Ovary (tissue), 10 donors: ENCODE measurements at regions of chr13 and their contacts with region 1.

Region 1: DNA sequence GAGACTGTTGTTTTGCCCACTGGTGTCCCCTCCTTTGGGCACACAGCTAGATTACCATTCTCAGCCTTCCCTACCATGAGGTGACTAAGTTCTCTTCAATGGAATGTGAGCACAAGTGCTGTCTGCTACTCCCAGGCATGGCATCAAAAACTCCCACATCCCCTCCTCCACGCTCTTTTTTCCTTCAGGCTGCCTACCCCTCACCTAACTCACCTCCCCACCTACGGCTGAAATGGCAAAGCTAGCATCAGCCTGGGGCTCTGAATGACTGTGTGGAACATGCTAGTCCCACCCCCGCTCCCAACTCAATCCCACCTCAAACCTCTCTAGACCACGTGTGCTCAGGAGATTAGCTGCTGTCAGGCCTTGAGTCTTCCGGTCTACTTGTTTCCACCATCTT is 512.2 kb downstream of the DIAPH3 start:
- DNase-seq: no peak
- H3K4me3 ChIP-seq: no peak overlapping the region
- H3K27ac ChIP-seq: no peak overlapping the region
- H3K4me1 ChIP-seq: no peaks in the 10 kb centered on the region
- H3K27me3 ChIP-seq: no peaks in the 10 kb centered on the region
- CTCF ChIP-seq: no peak
- EP300 ChIP-seq: no peak
- POLR2A ChIP-seq: no peak

Region 2: GRCh38 chr13:61078976-61079770 is 1427.7 kb after region 1 on chr13:
- intact Hi-C with region 1: loop called in 1 of 4 experiments (anchors 5 kb)
- DNase-seq: no peak
- H3K4me3 ChIP-seq: no peak overlapping the region
- H3K27ac ChIP-seq: no peak overlapping the region
- H3K4me1 ChIP-seq: no peaks in the 10 kb centered on the region
- H3K27me3 ChIP-seq: no peaks in the 10 kb centered on the region
- CTCF ChIP-seq: no peak
- EP300 ChIP-seq: no peak
- POLR2A ChIP-seq: no peak